ENCODE measurements at regions of chr2 and their contacts with region 1.

Region 1: GRCh38 chr2:70124983-70125480 is 37.8 kb downstream of the PCBP1 start:
- DNase-seq: peak; percentile 93
- H3K4me3 ChIP-seq: peak overlapping the region; percentile 38 to 75 (median 46)
- H3K27ac ChIP-seq: peak overlapping the region; percentile 97 to 100 (median 99)
- H3K4me1 ChIP-seq: peaks cover 52 to 88% (median 77%) of the 10 kb centered on the region in 6 donors
- H3K27me3 ChIP-seq: no peaks in the 10 kb centered on the region
- CTCF ChIP-seq: no peak
- POLR2A ChIP-seq: no peak

Region 2: DNA sequence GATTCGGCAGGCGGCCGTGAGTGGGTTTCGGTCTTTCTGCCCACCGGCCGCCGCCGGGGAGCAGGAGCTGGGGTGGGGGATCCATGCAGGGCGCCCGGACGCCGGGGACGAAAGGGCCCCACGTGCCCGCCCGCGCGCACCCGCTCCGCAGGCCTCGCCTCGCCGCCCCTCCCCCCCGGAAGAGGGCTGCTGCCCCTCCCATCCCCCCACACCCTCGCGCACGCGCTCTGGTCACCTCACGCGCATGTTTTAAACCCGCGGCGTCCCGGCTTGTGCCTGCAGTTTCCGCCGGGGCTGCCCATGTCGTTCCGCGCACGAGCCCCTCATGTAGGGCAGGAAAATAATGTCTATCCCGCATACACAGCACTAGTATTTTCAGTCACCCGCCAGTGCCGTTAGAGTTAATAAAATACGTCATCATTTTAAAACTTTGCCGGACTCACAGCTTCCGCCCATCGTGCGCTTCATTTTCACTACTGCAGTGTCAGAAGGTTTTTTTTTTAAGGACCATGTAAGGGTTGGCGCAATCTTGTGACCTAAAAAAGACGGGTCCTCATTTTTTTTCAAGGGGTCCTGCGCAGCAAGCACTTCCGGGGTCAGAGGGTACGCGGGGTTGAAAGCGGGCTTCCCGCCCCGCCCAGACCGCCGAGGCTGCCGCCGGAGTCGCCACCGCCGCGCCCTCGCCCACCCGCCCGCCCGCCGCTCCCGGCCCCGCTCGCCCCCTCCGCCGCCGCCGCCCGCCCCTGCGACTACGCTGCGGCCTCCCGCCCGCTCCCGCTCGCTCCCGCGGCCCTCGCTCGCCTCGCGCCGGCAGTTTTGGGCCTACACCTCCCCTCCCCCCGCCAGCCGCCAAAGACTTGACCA is 38.0 kb before region 1 on chr2 and contains the start of gene PCBP1:
- intact Hi-C with region 1: loop called (anchors 5 kb)
- DNase-seq: peak; percentile 98
- H3K4me3 ChIP-seq: peak within 1 kb of the TSS; percentile 75 to 97 (median 91)
- H3K27ac ChIP-seq: peak within 1 kb of the TSS; percentile 97 to 100 (median 100)
- H3K4me1 ChIP-seq: peaks cover 33 to 80% (median 66%) of the 10 kb centered on the region in 6 donors
- H3K27me3 ChIP-seq: no peaks in the 10 kb centered on the region
- CTCF ChIP-seq: no peak
- POLR2A ChIP-seq: peak in 2 of 3 donors; percentile 18 to 68
- total RNA-seq, gene PCBP1: 256 to 351 (median 301) TPM